OCI-LY7 (cell line): ENCODE measurements at regions of chr22 and their contacts with region 1.

Region 1: GRCh38 chr22:37316875-37317371 is 34.6 kb downstream of the CYTH4 start:
- DNase-seq: peak; percentile 84
- H3K4me3 ChIP-seq: no peak overlapping the region
- H3K27ac ChIP-seq: no peak overlapping the region
- H3K4me1 ChIP-seq: peaks cover 10% of the 10 kb centered on the region
- CTCF ChIP-seq: peak; percentile 92

Region 2: GRCh38 chr22:37260901-37261336 is 56.0 kb before region 1 on chr22:
- CTCF ChIA-PET with region 1: no interaction called
- POLR2A ChIA-PET with region 1: no interaction called
- intact Hi-C with region 1: no loop called
- DNase-seq: peak; percentile 78
- H3K4me3 ChIP-seq: no peak overlapping the region
- H3K27ac ChIP-seq: no peak overlapping the region
- H3K4me1 ChIP-seq: peaks cover 26% of the 10 kb centered on the region
- CTCF ChIP-seq: peak; percentile 97

Region 3: DNA sequence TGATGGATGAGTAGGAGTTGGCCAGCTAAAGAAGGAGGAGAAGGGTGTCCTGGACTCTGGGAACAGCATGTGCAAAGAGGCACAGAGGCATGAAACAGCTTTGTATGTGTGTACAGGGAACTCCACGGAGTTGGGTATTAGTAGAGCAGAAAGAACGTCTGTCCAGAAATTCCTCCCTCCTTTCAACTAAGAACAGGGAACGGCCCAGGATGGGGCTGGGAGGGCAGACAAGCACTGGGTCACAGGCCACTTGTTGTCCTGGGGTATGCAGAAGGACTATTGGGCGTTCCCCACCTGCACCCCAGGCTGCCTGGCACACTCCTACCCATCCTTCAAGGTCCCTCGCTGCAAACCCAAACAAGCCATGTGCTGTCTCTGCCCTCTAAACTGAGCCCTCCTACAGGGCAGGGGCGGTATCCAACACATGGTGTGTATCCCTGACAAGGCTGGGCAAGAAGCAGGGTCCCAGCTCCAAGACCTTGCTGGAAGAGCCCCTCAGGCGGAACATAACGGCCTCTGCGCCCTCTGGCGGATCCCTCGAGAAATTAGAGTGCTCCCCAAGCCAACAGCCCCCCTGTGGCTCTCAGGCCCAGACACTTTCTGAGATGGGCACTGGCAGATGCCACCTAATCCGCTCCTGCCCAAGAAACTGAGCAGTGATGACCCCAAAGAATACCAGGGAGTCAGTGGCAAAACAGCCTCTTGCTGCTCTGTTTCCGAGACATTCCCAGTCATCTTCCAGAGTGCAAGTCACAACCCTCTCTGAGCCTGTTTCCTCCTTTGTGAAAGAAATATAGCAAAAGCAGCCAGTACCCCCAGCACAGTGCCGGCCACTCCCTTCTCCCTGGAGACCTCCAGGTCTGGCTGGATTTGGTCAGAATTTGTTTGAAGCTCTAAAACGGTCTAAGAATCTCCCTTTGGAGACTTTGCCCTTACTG is 112.0 kb after region 1 on chr22:
- CTCF ChIA-PET with region 1: interaction called, 4 read pairs
- POLR2A ChIA-PET with region 1: no interaction called
- intact Hi-C with region 1: loop called (anchors 1 kb)
- DNase-seq: peak; percentile 75
- H3K4me3 ChIP-seq: no peak overlapping the region
- H3K27ac ChIP-seq: no peak overlapping the region
- H3K4me1 ChIP-seq: no peaks in the 10 kb centered on the region
- CTCF ChIP-seq: peak; percentile 95

Region 4: GRCh38 chr22:37457093-37457893 is 140.4 kb after region 1 on chr22:
- CTCF ChIA-PET with region 1: interaction called, 3 read pairs
- POLR2A ChIA-PET with region 1: no interaction called
- intact Hi-C with region 1: loop called (anchors 1 kb)
- DNase-seq: peak; percentile 78
- H3K4me3 ChIP-seq: no peak overlapping the region
- H3K27ac ChIP-seq: no peak overlapping the region
- H3K4me1 ChIP-seq: peaks cover 9% of the 10 kb centered on the region
- CTCF ChIP-seq: peak; percentile 99